Caco-2 (cell line): ENCODE measurements at regions of chr11 and their contacts with region 1.

Region 1: GRCh38 chr11:119888119-119888518 is 159.1 kb upstream of the NECTIN1 start:
- DNase-seq: no peak
- H3K4me3 ChIP-seq: no peak overlapping the region
- H3K4me3 Mint-ChIP-seq: no peak overlapping the region
- H3K27ac Mint-ChIP-seq: no peak overlapping the region
- H3K4me1 ChIP-seq: no peaks in the 10 kb centered on the region
- H3K4me1 Mint-ChIP-seq: no peaks in the 10 kb centered on the region
- H3K27me3 ChIP-seq: no peaks in the 10 kb centered on the region
- H3K27me3 Mint-ChIP-seq: no peaks in the 10 kb centered on the region
- CTCF ChIP-seq: no peak

Region 2: DNA sequence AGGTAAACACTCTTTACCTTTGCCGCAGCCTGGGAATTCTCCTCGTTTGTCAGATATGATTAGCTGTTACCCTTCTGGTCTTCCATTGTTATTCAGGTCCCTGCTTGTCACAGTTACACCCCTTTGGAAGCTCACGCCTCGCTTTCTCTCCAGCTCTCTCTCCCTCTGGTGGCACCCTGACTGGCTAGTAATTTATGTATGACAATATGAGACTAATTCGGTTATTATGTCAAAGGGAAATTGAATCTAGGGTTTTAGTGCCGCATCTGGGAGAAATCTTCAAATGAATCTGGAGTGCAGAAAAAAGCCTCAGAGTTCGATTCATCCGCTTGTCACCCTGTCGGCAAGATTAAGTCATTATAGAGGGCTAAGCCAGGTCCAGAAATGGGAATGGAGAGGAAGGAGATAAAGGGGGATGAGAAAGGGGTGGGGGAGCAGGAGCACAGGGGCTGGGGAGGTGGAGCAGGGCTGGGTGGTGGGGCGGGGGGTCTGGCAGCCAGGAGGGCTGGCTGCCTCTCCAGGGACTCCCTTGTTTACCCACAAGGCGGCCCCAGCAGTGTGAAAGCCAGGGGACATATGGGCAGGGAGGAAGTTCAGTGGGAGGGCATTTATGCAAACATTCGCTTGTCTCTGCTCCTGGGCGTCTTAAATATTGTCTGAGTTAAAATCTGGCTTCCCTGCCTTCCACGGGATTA is 19.9 kb after region 1 on chr11:
- CTCF ChIA-PET with region 1: interaction called, 3 read pairs
- POLR2A ChIA-PET with region 1: no interaction called
- intact Hi-C with region 1: loop called (anchors 2 kb)
- DNase-seq: no peak
- H3K4me3 ChIP-seq: no peak overlapping the region
- H3K4me3 Mint-ChIP-seq: peak overlapping the region; percentile 64
- H3K27ac Mint-ChIP-seq: peak overlapping the region; percentile 86
- H3K4me1 ChIP-seq: peaks cover 70% of the 10 kb centered on the region
- H3K4me1 Mint-ChIP-seq: peaks cover 79% of the 10 kb centered on the region
- H3K27me3 ChIP-seq: no peaks in the 10 kb centered on the region
- H3K27me3 Mint-ChIP-seq: no peaks in the 10 kb centered on the region
- CTCF ChIP-seq: peak in 1 of 2 experiments; percentile 11

Region 3: DNA sequence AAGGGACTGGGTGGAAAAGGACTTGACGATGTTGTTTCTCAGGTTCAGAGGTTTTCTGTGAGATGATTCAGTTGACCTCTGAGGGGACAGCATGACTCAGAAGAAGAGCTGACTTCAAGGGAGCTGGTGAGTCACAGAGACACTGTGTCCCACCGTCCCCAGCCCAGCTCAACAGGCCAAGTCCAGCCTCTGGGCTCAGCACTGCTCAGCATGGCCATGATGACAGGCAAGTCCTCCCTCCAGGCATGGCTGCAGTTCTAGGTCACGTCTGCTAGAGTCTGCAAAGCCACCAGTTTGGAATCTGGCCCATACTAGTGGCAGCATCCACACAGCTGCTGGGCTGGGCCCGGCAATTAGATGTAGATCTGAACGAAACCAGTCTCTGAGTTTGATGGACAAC is 236.9 kb after region 1 on chr11:
- CTCF ChIA-PET with region 1: no interaction called
- POLR2A ChIA-PET with region 1: no interaction called
- intact Hi-C with region 1: no loop called
- DNase-seq: no peak
- H3K4me3 ChIP-seq: no peak overlapping the region
- H3K4me3 Mint-ChIP-seq: no peak overlapping the region
- H3K27ac Mint-ChIP-seq: no peak overlapping the region
- H3K4me1 ChIP-seq: peaks cover 29% of the 10 kb centered on the region
- H3K4me1 Mint-ChIP-seq: peaks cover 18% of the 10 kb centered on the region
- H3K27me3 ChIP-seq: no peaks in the 10 kb centered on the region
- H3K27me3 Mint-ChIP-seq: peaks cover 11% of the 10 kb centered on the region
- CTCF ChIP-seq: no peak